H1 (cell line): ENCODE measurements at regions of chr17 and their contacts with region 1.

Region 1: DNA sequence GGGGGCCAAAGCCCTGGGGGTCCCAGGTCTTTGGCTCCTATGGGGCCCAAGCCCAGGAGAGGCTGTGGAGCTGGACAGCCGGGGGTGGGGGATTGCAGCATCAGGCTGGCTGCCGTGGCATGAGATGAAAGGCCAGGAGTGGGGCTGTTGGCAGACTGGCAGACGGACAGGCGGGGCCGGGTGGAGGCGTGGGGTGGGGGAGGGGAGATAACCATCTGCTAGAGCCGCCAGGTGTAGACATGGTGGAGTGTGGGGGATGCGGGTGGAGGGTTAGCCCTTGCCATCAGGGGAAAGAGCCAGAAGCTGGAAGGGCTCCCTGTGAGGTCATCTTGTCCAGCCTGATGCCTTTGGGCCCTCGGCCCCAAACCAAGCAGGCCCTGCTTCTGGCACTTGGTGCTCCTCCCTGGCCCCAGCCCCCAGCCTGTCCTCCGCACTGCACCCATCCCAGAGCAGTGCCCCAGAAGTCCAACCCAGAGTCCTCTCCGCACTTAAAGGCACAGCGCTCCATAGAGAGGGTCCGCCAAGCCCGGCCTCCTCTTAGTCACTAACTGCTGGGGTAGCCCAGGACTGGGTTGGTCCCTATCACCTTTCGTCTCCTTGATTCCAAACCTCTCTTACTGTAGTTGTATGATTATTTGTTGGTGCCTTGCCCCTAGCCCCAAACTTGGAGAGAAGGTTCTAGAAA is 33.3 kb upstream of the DLX4 start:
- DNase-seq: no peak
- H3K4me3 ChIP-seq: no peak overlapping the region
- H3K27ac ChIP-seq: no peak overlapping the region
- H3K4me1 ChIP-seq: peaks cover 0 to 10% (median 0%) of the 10 kb centered on the region in 4 experiments; a peak in 5 of 7 replicates
- H3K27me3 ChIP-seq: no peaks in the 10 kb centered on the region
- CTCF ChIP-seq: no peak
- EP300 ChIP-seq: no peak
- POLR2A ChIP-seq: no peak
- RAD21 ChIP-seq: no peak

Region 2: GRCh38 chr17:49870298-49870697 is 65.4 kb before region 1 on chr17:
- CTCF ChIA-PET with region 1: no interaction called
- POLR2A ChIA-PET with region 1: no interaction called
- DNase-seq: no peak
- H3K4me3 ChIP-seq: no peak overlapping the region
- H3K27ac ChIP-seq: no peak overlapping the region
- H3K4me1 ChIP-seq: peaks cover 0 to 19% (median 16%) of the 10 kb centered on the region in 4 experiments; a peak in 6 of 7 replicates
- H3K27me3 ChIP-seq: no peaks in the 10 kb centered on the region
- CTCF ChIP-seq: no peak
- EP300 ChIP-seq: no peak
- POLR2A ChIP-seq: no peak
- RAD21 ChIP-seq: no peak

Region 3: DNA sequence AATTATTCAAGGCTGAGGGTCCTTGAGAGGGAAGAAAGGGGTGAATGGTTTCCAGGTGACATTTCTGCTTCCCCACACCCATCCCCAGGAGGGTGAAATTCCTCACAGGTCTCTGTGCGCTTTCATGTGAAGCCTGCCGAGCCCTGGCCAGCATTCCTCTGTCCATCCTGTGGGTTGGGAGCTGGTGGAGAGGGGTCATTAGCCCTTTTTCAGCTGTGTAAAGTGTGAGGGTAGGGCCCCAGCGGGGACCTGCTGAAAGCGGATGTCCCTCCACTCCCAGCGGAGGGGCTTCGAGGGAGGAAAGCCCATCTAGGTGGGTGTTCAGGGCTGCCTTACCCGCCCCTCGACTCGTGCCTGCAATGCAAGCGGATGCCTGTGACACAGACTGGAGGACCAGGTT is 20.0 kb before region 1 on chr17:
- CTCF ChIA-PET with region 1: interaction called, 37 read pairs
- POLR2A ChIA-PET with region 1: interaction called, 5 read pairs
- DNase-seq: peak in 1 of 2 experiments; percentile 56
- H3K4me3 ChIP-seq: 0 out of 8 replicates have a peak overlapping the region, but pooled peaks of 1 of the 4 experiments have one; percentile 10
- H3K27ac ChIP-seq: no peak overlapping the region
- H3K4me1 ChIP-seq: peaks cover 3 to 12% (median 6%) of the 10 kb centered on the region in 4 experiments; a peak in 6 of 7 replicates
- H3K27me3 ChIP-seq: peaks cover 0 to 37% (median 32%) of the 10 kb centered on the region in 4 experiments; a peak in 6 of 7 replicates
- CTCF ChIP-seq: no peak
- EP300 ChIP-seq: no peak
- POLR2A ChIP-seq: no peak
- RAD21 ChIP-seq: no peak

Region 4: DNA sequence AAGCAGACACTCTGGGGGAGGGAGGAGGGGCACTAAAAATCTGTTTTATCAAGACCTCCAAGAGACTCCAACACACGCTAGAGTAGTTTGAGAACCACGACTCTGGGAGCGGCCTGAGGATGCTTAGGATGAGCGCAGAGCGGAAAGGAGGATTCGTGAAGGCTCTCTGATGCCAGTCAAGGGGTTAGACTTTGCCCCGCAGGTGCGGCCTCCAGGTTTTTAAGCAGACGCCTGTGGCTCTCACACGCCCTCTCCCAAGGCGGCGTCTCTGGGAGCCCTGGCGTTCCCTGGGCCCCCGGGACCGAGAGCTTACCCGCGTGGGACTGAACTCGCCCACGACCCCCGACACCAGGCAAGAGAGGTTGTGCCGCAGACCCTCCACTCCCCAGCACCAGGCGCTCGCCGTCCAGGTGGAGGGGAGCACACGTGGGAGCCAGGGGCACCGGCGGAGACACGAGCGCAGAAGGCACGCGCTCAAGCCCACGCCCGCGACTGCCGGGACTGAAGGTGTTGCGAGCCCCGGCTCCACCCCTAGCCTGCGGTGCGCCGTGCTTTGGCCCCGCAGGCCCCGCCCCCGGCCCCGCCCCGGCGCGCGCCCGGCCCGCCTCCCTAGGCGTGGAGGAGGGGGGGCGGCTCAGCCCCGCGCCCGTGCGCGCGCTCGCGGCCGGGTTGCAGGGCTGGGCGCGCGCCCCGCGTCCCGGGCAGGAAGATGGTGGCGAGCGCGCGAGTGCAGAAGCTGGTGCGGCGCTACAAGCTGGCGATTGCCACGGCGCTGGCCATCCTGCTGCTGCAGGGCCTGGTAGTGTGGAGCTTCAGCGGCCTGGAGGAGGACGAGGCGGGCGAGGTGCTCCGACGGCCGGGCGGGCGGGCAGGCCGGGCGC is 410.0 kb after region 1 on chr17 and contains the start of gene XYLT2:
- CTCF ChIA-PET with region 1: no interaction called
- POLR2A ChIA-PET with region 1: no interaction called
- DNase-seq: peak in 1 of 2 experiments; percentile 89
- H3K4me3 ChIP-seq: peak within 1 kb of the TSS; percentile 81 to 93 (median 88)
- H3K27ac ChIP-seq: peak within 1 kb of the TSS; percentile 80; the same call in 1 of the 2 replicates
- H3K4me1 ChIP-seq: peaks cover 4 to 17% (median 11%) of the 10 kb centered on the region in 4 experiments
- H3K27me3 ChIP-seq: peaks cover 0 to 9% (median 5%) of the 10 kb centered on the region in 4 experiments; a peak in 4 of 7 replicates
- CTCF ChIP-seq: no peak
- EP300 ChIP-seq: no peak
- POLR2A ChIP-seq: peak; percentile 51 to 60
- RAD21 ChIP-seq: no peak
- total RNA-seq, gene XYLT2: 28.0 and 28.9 TPM in 2 replicates